ENCODE measurements at regions of chr17 and their contacts with region 1.

Region 1: GRCh38 chr17:63075969-63076368 is 109.9 kb downstream of the TANC2 start:
- DNase-seq: no peak
- H3K4me3 ChIP-seq: no peak overlapping the region
- H3K27ac ChIP-seq: no peak overlapping the region
- H3K4me1 ChIP-seq: peaks cover 14% of the 10 kb centered on the region
- H3K27me3 ChIP-seq: no peaks in the 10 kb centered on the region
- CTCF ChIP-seq: no peak

Region 2: DNA sequence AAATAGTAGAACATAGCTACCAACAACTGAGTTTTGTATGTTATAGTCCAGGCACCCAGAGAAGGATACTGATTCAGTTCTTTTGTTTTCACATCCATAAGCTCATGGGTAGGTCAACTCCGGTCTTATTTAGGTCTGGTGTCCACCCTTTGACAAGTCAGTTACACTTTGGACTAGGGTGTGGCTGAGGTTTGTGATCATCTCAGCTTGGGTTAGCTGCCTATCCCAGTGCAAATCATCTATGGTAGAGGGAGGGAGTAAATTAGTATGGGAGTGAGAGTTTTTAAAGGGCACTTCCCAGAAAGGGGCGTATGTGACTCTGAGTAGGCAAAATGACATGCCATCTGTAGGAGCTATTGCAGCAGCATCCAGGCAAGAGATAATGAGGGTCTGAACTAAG is 43.8 kb before region 1 on chr17:
- CTCF ChIA-PET with region 1: no interaction called
- dilution Hi-C with region 1: loop called (anchors 5 kb)
- in situ Hi-C with region 1: no loop called
- intact Hi-C with region 1: no loop called
- DNase-seq: no peak
- H3K4me3 ChIP-seq: no peak overlapping the region
- H3K27ac ChIP-seq: no peak overlapping the region
- H3K4me1 ChIP-seq: peaks cover 22% of the 10 kb centered on the region
- H3K27me3 ChIP-seq: no peaks in the 10 kb centered on the region
- CTCF ChIP-seq: no peak